Heart left ventricle (tissue), 16 donors: ENCODE measurements at regions of chr18 and their contacts with region 1.

Region 1: GRCh38 chr18:8450013-8450412 is 159.2 kb upstream of the RAB12 start:
- DNase-seq: peak in 2 of 5 donors; percentile 28 to 49
- ATAC-seq: peak in 3 of 4 donors; percentile 36 to 88 (median 45)
- H3K4me3 ChIP-seq: no peak overlapping the region
- H3K27ac ChIP-seq: peak overlapping the region in 10 of 12 donors; percentile 5 to 91 (median 68)
- H3K4me1 ChIP-seq: peaks cover 0 to 41% (median 5%) of the 10 kb centered on the region in 12 donors
- H3K27me3 ChIP-seq: no peaks in the 10 kb centered on the region
- CTCF ChIP-seq: peak; percentile 27 to 58 (median 38)
- POLR2A ChIP-seq: no peak

Region 2: GRCh38 chr18:8091035-8091434 is 359.0 kb before region 1 on chr18:
- intact Hi-C with region 1: no loop called
- DNase-seq: no peak
- ATAC-seq: peak; percentile 32 to 78 (median 51)
- H3K4me3 ChIP-seq: no peak overlapping the region
- H3K27ac ChIP-seq: no peak overlapping the region
- H3K4me1 ChIP-seq: no peaks in the 10 kb centered on the region
- H3K27me3 ChIP-seq: no peaks in the 10 kb centered on the region
- CTCF ChIP-seq: no peak
- POLR2A ChIP-seq: no peak

Region 3: GRCh38 chr18:8424917-8425725 is 24.9 kb before region 1 on chr18:
- intact Hi-C with region 1: loop called in 1 of 10 experiments (anchors 2 kb)
- DNase-seq: no peak
- ATAC-seq: no peak
- H3K4me3 ChIP-seq: no peak overlapping the region
- H3K27ac ChIP-seq: no peak overlapping the region
- H3K4me1 ChIP-seq: peaks cover 0 to 6% (median 0%) of the 10 kb centered on the region in 12 donors
- H3K27me3 ChIP-seq: no peaks in the 10 kb centered on the region
- CTCF ChIP-seq: no peak
- POLR2A ChIP-seq: no peak